Adrenal gland (tissue), 19 donors: ENCODE measurements at regions of chr6 and their contacts with region 1.

Region 1: GRCh38 chr6:79949233-79949632 is 1.9 kb upstream of the ELOVL4 start:
- DNase-seq: peak; percentile 24 to 78 (median 42)
- H3K4me3 ChIP-seq: no peak overlapping the region
- H3K27ac ChIP-seq: no peak overlapping the region
- H3K4me1 ChIP-seq: peaks cover 0 to 13% of the 10 kb centered on the region in 2 donors
- H3K27me3 ChIP-seq: peaks cover 18% of the 10 kb centered on the region
- CTCF ChIP-seq: peak; percentile 19 to 50 (median 38)
- POLR2A ChIP-seq: no peak

Region 2: DNA sequence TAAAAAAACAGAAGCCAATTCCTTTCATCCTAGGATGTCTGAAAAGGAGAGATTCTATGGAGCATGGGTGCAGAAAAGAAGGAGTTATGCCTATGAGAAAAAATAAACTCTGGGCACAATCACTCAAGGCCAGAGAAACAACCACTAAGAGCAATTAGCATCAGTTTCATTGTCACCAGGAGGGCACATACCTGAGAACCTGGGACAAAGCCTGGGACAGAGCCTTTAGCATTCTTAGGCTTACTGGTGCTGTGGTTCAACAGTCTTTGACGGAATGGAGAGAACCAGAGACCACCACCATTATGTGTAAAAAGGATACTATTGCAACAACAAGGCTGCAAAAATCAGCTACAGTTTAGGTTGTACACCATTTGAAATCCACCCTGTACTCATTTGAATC is 127.8 kb after region 1 on chr6:
- intact Hi-C with region 1: no loop called
- DNase-seq: no peak
- H3K4me3 ChIP-seq: no peak overlapping the region
- H3K27ac ChIP-seq: no peak overlapping the region
- H3K4me1 ChIP-seq: no peaks in the 10 kb centered on the region
- H3K27me3 ChIP-seq: no peaks in the 10 kb centered on the region
- CTCF ChIP-seq: no peak
- POLR2A ChIP-seq: no peak

Region 3: GRCh38 chr6:80094017-80094416 is 144.8 kb after region 1 on chr6:
- intact Hi-C with region 1: loop called (anchors 5 to 10 kb)
- DNase-seq: no peak
- H3K4me3 ChIP-seq: no peak overlapping the region
- H3K27ac ChIP-seq: no peak overlapping the region
- H3K4me1 ChIP-seq: no peaks in the 10 kb centered on the region
- H3K27me3 ChIP-seq: no peaks in the 10 kb centered on the region
- CTCF ChIP-seq: peak; percentile 27 to 64 (median 50)
- POLR2A ChIP-seq: no peak